ENCODE measurements at regions of chr20 and their contacts with region 1.

Region 1: DNA sequence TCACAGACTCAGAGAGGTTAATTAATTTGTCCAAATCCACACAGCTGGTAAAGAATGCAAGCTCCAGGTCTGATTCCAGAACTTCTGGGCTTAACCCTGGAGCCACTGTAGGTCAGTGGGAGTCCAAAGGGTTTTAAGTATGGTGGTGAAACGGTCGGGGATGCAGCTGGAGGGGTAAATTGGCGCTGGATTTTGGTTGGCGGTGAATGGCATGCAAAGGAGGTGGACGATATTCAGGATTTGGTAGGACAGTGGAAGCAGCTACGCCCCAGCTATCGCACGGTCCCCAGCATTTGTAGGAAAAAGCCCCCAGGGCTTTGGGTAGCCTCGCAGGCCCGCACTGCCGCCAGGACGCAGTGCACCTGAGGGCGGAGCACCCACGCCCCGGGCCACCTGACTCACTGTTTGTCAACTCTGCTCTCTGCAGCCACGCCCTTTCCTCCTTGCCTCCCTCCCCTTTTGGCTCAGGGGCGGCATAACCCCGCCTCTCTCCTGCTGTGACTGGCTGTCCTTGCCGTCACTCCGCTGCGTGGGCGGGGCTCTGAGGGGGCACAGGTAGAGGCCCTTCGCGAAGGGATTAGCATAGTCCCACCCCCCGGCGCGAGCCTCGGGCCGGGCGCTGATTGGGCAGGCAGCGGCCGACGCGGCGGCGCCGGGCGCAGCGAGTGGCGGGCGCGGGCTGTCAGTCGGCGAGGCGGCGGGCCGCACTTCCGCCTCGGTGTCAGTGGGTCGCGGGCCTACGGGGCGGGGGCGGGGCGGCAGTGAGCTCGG is at the start of gene OSBPL2:
- DNase-seq: peak; percentile 97 to 99
- H3K4me3 ChIP-seq: peak within 1 kb of the TSS; percentile 86 to 96
- H3K27ac ChIP-seq: peak within 1 kb of the TSS; percentile 88 to 95
- H3K4me1 ChIP-seq: peaks cover 2 to 7% of the 10 kb centered on the region in 2 donors
- H3K27me3 ChIP-seq: no peaks in the 10 kb centered on the region
- CTCF ChIP-seq: no peak
- total RNA-seq, gene OSBPL2: 25.0 TPM

Region 2: DNA sequence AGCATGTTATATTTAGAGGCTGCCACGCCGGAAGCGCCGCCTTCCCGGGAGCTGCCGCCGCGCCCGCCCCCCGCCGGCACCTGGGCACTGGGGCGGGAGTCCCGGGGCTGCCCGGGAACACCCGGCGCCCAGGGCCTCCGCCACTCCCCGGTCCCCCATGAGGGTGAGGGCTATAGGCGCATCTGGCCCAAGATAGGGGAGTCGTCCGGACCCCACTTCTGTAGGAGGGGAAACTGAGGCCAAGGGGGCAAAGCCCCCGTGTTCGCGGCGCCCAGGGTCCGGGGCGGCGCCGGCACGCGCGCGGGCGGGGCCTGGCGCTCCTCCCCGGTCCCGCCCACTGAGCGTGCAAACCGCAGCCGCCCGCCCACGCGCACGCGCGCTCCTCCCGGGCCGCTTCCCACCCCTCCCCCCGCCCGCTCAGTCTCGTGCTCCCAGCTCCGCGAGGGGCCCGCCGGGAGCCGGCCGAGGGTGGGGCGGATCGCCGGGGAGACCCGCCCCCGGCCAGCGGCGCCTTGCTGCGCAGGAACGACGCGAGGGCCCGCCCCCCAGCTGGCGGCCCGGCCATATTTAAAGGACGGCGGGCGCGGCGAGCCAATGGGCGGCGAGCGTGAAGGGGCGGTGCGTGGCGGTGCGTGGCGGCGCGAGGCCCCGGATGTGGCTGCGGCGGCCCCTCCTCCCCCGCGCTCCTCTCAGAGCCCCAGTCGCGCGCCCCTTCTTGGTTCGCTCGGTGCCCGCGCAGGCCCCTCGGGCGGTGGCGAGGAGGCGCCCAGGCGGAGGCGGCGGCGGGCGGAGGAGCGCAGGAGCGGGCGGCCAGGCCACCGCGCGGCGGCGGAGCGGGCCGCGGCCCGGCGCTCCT is 116.0 kb before region 1 on chr20 and contains the start of gene LSM14B:
- intact Hi-C with region 1: loop called (anchors 1 kb)
- DNase-seq: peak; percentile 84 to 98
- H3K4me3 ChIP-seq: peak within 1 kb of the TSS; percentile 70 to 84
- H3K27ac ChIP-seq: peak within 1 kb of the TSS; percentile 97 to 98
- H3K4me1 ChIP-seq: peaks cover 0 to 26% of the 10 kb centered on the region in 2 donors
- H3K27me3 ChIP-seq: no peaks in the 10 kb centered on the region
- CTCF ChIP-seq: no peak
- total RNA-seq, gene LSM14B: 27.6 TPM

Region 3: DNA sequence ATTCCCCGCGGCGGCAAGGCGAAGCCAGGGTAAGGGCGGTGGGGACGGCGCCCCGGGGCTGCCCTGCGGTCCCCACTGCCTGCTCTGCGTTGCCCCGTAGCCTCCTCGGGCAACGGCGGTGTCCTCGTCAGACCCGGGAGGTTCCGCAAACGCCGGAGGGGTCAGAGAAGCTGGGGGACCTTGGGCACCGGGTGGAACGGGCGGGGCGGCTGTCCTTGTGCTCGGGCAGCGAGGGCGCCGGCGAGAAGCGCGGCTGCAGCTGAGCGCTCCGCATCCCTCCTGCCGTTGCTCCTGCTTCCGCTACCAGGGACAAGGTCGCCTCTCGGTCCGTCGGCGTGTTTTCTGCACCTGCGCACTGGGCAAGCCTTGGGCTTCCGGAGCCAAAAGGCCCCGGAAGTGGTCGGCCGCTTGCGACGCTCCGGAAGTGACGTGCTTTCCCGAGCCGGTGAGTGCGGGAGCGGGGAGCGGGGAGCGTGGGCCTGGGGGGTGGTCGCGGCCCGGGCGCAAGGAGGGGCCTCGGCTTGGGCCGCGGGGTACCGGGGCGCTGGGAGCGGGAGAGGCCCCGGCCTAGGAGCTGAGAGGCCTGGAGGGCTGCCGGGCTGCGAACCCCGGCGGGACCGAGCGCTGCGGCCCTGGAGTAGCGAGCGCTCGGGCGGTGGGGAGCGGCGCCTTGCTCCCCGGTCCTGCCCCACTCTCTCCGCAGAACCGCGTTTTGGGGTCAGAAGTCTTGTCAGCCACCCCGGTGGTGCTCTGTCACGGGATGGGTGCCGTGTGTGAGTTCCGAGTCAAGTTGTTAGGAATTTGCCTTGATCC is 55.2 kb before region 1 on chr20 and contains the start of gene MTG2:
- intact Hi-C with region 1: loop called (anchors 1 kb)
- DNase-seq: peak; percentile 61 to 96
- H3K4me3 ChIP-seq: peak within 1 kb of the TSS; percentile 84 to 88
- H3K27ac ChIP-seq: peak within 1 kb of the TSS; percentile 87 to 97
- H3K4me1 ChIP-seq: peaks cover 3 to 19% of the 10 kb centered on the region in 2 donors
- H3K27me3 ChIP-seq: no peaks in the 10 kb centered on the region
- CTCF ChIP-seq: no peak
- total RNA-seq, gene MTG2: 14.5 TPM

Region 4: DNA sequence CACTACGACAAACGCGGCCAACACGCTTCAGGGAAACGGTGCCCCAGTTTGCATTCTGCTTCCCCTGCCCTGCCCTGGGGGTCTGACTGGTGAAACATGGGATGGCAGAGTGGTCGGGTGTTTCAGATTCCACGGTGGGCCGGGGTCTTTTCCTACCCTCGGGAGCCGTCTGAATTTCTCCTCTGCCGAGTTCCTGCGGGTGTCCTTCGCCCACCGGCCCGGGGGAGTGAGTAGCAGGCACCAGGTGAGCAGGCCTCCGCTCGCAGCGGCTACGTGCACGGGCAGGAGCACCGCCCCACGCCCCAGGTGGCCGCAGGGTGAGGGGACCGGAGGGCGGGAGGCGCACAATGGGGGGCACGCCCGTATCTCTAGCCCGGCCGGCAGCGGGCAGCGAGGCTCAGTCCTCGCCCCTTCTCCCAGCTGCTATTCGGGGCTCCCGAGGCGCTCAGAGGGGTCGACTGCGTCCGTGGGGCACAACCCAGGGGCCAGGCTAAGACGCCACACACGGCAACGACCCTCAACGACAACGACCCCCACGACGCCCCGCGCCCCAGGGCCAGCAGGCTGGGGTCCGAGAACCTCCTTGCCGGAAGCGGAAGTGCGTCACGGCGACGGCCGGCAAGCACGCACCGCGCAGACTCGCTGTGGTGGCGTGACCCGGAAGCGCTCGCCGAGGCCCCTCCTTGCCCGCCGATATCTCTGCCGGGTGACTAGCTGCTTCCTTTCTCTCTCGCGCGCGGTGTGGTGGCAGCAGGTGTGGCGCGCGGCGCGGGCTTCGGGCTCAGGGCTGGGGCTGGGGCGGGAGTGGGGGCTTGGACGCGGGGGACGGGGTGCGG is 148.6 kb after region 1 on chr20 and contains the start of gene RPS21:
- intact Hi-C with region 1: loop called (anchors 1 kb)
- DNase-seq: peak; percentile 57 to 96
- H3K4me3 ChIP-seq: peak within 1 kb of the TSS; percentile 81 to 93
- H3K27ac ChIP-seq: peak within 1 kb of the TSS; percentile 93 to 94
- H3K4me1 ChIP-seq: peaks cover 15% of the 10 kb centered on the region in 2 donors
- H3K27me3 ChIP-seq: no peaks in the 10 kb centered on the region
- CTCF ChIP-seq: no peak
- total RNA-seq, gene RPS21: 1,828 TPM

Region 5: GRCh38 chr20:62875419-62876361 is 637.7 kb after region 1 on chr20:
- intact Hi-C with region 1: no loop called
- DNase-seq: peak; percentile 37 to 91
- H3K4me3 ChIP-seq: peak overlapping the region in 1 of 2 donors; percentile 29
- H3K27ac ChIP-seq: peak overlapping the region; percentile 79 to 87
- H3K4me1 ChIP-seq: peaks cover 9 to 14% of the 10 kb centered on the region in 2 donors
- H3K27me3 ChIP-seq: no peaks in the 10 kb centered on the region
- CTCF ChIP-seq: peak; percentile 26 to 63 (median 58)

Region 6: GRCh38 chr20:62937366-62938104 is 699.5 kb after region 1 on chr20:
- intact Hi-C with region 1: loop called (anchors 10 kb)
- DNase-seq: peak; percentile 85 to 98
- H3K4me3 ChIP-seq: peak overlapping the region; percentile 82 to 91
- H3K27ac ChIP-seq: peak overlapping the region; percentile 89 to 93
- H3K4me1 ChIP-seq: peaks cover 18 to 26% of the 10 kb centered on the region in 2 donors
- H3K27me3 ChIP-seq: no peaks in the 10 kb centered on the region
- CTCF ChIP-seq: no peak